ENCODE measurements at regions of chr7 and their contacts with region 1.

Region 1: DNA sequence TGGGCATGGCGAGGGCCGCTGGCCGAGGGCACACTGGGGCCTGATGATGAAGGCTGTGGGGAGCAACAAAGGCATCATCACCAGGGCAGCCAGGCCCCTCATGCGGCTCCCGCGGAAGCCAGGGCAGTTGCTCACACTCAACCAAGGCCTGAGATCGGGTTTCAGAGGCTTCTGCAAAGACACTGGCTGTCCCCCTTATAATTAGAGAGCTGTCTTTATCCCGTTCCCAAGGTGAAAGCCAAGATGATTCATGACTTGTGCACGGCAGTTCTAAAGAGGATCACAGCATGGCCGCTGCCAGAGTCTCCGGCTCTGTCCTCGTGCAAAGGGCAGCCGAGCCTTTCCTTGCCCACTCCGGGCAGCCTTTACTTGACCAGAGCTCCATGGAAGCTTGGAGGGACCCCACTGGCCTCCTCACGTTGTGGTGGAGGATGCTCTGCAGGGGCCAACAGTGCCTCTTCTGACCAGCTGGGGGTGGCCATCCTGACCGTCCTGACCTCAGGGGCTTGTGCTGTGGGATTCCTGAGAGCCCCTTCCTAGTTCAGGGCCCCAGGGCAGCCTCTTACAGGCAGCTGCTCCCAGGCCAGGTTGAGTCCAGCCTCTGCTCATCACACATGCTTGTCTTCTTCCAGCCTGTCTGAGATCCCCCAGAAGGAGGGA is 82.3 kb downstream of the PRKAG2 start:
- DNase-seq: peak in 3 of 10 donors; percentile 27 to 68 (median 59)

Region 2: DNA sequence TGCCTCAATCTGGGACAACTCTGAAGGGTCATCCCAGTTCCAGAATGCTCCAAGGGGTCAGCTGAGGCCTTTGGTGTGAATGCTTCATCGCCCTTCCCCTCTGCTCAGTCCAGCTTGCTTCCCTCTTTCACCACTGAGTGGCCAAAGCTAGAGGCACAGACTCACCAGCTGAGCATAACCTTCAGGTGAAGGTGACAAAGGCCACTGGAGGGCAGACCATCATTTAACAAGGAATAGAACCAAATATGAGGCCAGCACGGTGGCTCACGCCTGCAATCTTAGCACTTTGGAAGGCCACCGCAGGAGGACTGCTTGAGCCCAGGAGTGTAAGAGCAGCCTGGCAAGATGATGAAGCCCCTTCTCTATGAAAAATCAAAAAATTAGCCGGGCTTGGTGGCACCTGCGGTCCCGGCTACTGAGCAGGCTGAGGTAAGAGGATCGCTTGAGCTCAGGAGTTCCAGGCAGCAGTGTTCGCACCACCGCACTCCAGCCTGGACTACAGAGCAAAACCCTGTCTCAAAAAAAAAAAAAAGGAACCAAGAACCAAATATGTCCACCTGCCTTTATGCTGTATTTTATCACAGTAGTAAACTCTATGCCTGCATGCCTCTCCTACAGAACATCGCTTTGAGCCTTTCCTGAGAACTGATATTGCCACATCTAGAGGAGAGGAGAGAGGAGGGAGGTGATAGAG is 68.9 kb after region 1 on chr7:
- intact Hi-C with region 1: loop called (anchors 5 kb)
- DNase-seq: peak in 4 of 10 donors; percentile 9 to 30 (median 25)

Measured in posterior cingulate gyrus (tissue), 11 donors.